ENCODE measurements at regions of chr12 and their contacts with region 1.

Region 1: DNA sequence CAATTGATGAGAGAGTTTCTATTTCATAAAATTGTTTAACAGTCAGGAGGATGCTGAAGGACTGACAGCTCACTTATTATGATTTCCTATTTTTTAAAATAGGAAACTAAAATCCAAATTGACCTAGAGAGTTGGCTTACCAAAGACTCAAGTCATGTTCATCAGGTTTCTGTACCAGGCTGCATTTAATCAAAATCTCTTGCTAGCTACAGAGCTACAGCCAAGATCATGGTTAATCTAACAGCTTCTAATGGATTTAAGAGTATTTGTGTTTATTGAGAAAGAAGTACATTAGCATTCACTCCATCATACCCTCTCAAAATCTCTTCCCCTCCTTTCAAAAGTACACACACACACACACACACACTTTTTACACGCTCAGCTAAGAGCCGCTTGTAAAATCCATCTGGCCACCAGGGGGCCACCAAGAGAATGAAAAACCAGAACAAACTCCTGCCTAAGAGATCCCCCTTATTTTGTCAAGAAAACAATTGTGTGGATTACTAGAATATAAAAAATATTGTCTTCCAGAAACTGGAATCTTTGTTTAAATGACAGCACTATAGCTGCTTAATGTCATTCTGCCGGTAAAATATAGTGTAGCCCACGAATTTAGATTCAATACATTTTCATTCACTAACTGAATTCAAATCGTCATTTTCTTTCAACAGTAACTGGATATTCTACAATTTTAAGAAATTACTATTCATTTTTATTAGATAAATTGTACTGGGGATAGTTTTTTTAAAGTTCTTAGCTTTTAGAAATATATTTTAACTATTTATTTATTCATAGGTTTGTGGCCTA is 334.0 kb downstream of the BTG1 start:
- DNase-seq: peak; percentile 57 to 86 (median 77)
- ATAC-seq: peak; percentile 71 to 88 (median 76)
- H3K4me3 ChIP-seq: no peak overlapping the region
- H3K4me3 Mint-ChIP-seq: peak overlapping the region in 2 of 3 donors; percentile 14 to 23
- H3K27ac ChIP-seq: peak overlapping the region; percentile 13
- H3K27ac Mint-ChIP-seq: peak overlapping the region; percentile 66 to 88
- H3K4me1 ChIP-seq: peaks cover 2 to 5% of the 10 kb centered on the region in 2 experiments
- H3K4me1 Mint-ChIP-seq: peaks cover 25 to 39% (median 30%) of the 10 kb centered on the region in 3 donors
- H3K27me3 ChIP-seq: no peaks in the 10 kb centered on the region
- H3K27me3 Mint-ChIP-seq: no peaks in the 10 kb centered on the region

Region 2: DNA sequence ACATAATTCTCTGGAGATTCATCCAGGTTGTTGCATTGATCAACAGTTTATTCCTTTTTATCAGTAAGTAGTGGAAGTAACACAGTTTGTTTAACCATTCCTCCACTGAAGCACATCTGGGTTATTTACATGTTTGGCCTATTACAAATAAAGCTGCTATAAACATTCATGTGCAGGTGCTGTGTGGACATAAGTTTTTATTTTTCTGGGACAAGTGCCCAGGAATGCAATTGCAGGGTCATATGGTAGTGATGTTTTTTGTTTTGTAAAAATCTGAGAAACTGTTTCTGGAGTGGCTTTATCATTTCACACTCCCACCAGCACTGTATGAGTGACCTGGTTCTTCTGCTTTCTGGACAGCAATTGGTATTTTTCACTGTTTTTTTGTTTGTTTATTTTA is 1362.1 kb before region 1 on chr12:
- CTCF ChIA-PET with region 1: no interaction called
- POLR2A ChIA-PET with region 1: no interaction called
- DNase-seq: no peak
- ATAC-seq: no peak
- H3K4me3 ChIP-seq: no peak overlapping the region
- H3K4me3 Mint-ChIP-seq: no peak overlapping the region
- H3K27ac ChIP-seq: no peak overlapping the region
- H3K27ac Mint-ChIP-seq: no peak overlapping the region
- H3K4me1 ChIP-seq: no peaks in the 10 kb centered on the region
- H3K4me1 Mint-ChIP-seq: no peaks in the 10 kb centered on the region
- H3K27me3 ChIP-seq: no peaks in the 10 kb centered on the region
- H3K27me3 Mint-ChIP-seq: no peaks in the 10 kb centered on the region

Region 3: GRCh38 chr12:90836689-90837088 is 975.0 kb before region 1 on chr12:
- CTCF ChIA-PET with region 1: no interaction called
- POLR2A ChIA-PET with region 1: no interaction called
- DNase-seq: no peak
- ATAC-seq: no peak
- H3K4me3 ChIP-seq: no peak overlapping the region
- H3K4me3 Mint-ChIP-seq: no peak overlapping the region
- H3K27ac ChIP-seq: no peak overlapping the region
- H3K27ac Mint-ChIP-seq: no peak overlapping the region
- H3K4me1 ChIP-seq: no peaks in the 10 kb centered on the region
- H3K4me1 Mint-ChIP-seq: peaks cover 0 to 9% (median 3%) of the 10 kb centered on the region in 3 donors
- H3K27me3 ChIP-seq: no peaks in the 10 kb centered on the region
- H3K27me3 Mint-ChIP-seq: no peaks in the 10 kb centered on the region

Region 4: GRCh38 chr12:91778938-91779400 is 32.7 kb before region 1 on chr12:
- CTCF ChIA-PET with region 1: interaction called in 1 of 2 experiments, 13 read pairs
- POLR2A ChIA-PET with region 1: interaction called in 1 of 2 experiments, 3 read pairs
- DNase-seq: peak in 31 of 35 experiments; percentile 1 to 64 (median 13)
- ATAC-seq: peak; percentile 72 to 86 (median 81)
- H3K4me3 ChIP-seq: peak overlapping the region in 1 of 2 donors; percentile 26
- H3K4me3 Mint-ChIP-seq: peak overlapping the region; percentile 64 to 80 (median 79)
- H3K27ac ChIP-seq: peak overlapping the region; percentile 83
- H3K27ac Mint-ChIP-seq: peak overlapping the region; percentile 90 to 96
- H3K4me1 ChIP-seq: peaks cover 7 to 36% of the 10 kb centered on the region in 2 experiments
- H3K4me1 Mint-ChIP-seq: peaks cover 43 to 49% (median 43%) of the 10 kb centered on the region in 3 donors
- H3K27me3 ChIP-seq: no peaks in the 10 kb centered on the region
- H3K27me3 Mint-ChIP-seq: no peaks in the 10 kb centered on the region

Region 5: DNA sequence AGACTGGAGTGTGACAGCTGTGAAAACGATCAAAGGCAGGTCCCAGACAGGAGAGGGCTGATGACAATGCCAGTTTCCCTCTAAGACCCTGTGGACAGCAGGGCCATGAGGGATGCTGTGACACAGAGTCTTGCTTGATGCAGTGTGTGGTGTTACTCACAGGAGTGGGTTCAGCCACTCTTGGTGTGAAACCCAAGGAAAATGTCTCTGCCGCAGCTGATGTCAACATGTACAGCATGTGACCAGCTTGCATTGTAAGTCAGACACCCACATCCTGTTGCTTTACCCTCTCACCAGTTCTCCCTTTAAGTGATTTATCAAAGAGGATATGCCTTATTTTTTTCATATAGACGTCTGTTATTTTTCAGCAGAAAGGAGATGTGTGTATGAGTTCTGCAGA is 65.3 kb after region 1 on chr12:
- CTCF ChIA-PET with region 1: interaction called, 7 to 39 read pairs
- POLR2A ChIA-PET with region 1: interaction called in 1 of 2 experiments, 9 read pairs
- DNase-seq: peak; percentile 60 to 97 (median 86)
- ATAC-seq: peak; percentile 91 to 98 (median 96)
- H3K4me3 ChIP-seq: peak overlapping the region in 1 of 2 donors; percentile 30
- H3K4me3 Mint-ChIP-seq: peak overlapping the region; percentile 69 to 84 (median 77)
- H3K27ac ChIP-seq: peak overlapping the region; percentile 97
- H3K27ac Mint-ChIP-seq: peak overlapping the region; percentile 97 to 100
- H3K4me1 ChIP-seq: peaks cover 42 to 47% of the 10 kb centered on the region in 2 experiments
- H3K4me1 Mint-ChIP-seq: peaks cover 71 to 84% (median 82%) of the 10 kb centered on the region in 3 donors
- H3K27me3 ChIP-seq: no peaks in the 10 kb centered on the region
- H3K27me3 Mint-ChIP-seq: no peaks in the 10 kb centered on the region

Region 6: GRCh38 chr12:91991399-91992187 is 179.9 kb after region 1 on chr12:
- CTCF ChIA-PET with region 1: interaction called in 1 of 2 experiments, 10 read pairs
- POLR2A ChIA-PET with region 1: interaction called in 1 of 2 experiments, 8 read pairs
- DNase-seq: peak in 1 of 35 experiments; percentile 71
- ATAC-seq: peak; percentile 50 to 86 (median 83)
- H3K4me3 ChIP-seq: no peak overlapping the region
- H3K4me3 Mint-ChIP-seq: no peak overlapping the region
- H3K27ac ChIP-seq: peak overlapping the region; percentile 15
- H3K27ac Mint-ChIP-seq: peak overlapping the region; percentile 68 to 78
- H3K4me1 ChIP-seq: peaks cover 6 to 9% of the 10 kb centered on the region in 2 experiments
- H3K4me1 Mint-ChIP-seq: peaks cover 58 to 65% (median 62%) of the 10 kb centered on the region in 3 donors
- H3K27me3 ChIP-seq: no peaks in the 10 kb centered on the region
- H3K27me3 Mint-ChIP-seq: no peaks in the 10 kb centered on the region

Region 7: DNA sequence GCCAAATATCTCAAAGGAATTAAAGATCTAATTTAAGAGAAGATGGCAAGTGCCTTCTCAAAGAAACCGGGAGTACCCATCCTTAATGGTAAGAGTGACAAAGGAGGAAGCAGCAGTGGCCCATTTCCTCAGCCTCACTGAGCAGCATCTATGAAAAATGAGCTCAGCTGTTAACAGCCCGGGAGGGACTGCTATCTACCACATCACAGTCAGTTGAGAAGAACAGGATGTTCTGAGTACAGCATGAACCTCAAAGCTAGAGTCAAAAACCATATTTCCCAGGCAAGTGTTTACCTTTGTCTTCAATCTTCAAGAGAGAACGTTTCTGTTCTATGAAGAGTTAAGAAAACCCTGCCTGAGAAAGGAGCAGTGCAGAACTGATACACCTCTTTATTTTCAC is 218.9 kb after region 1 on chr12:
- CTCF ChIA-PET with region 1: interaction called, 3 to 11 read pairs
- POLR2A ChIA-PET with region 1: interaction called, 3 to 5 read pairs
- DNase-seq: peak in 34 of 35 experiments; percentile 46 to 88 (median 67)
- ATAC-seq: peak; percentile 92
- H3K4me3 ChIP-seq: peak overlapping the region in 1 of 2 donors; percentile 11
- H3K4me3 Mint-ChIP-seq: peak overlapping the region; percentile 58 to 71 (median 66)
- H3K27ac ChIP-seq: peak overlapping the region; percentile 94
- H3K27ac Mint-ChIP-seq: peak overlapping the region; percentile 97 to 98
- H3K4me1 ChIP-seq: peaks cover 60 to 62% of the 10 kb centered on the region in 2 experiments
- H3K4me1 Mint-ChIP-seq: peaks cover 87 to 91% (median 89%) of the 10 kb centered on the region in 3 donors
- H3K27me3 ChIP-seq: no peaks in the 10 kb centered on the region
- H3K27me3 Mint-ChIP-seq: no peaks in the 10 kb centered on the region

Region 8: DNA sequence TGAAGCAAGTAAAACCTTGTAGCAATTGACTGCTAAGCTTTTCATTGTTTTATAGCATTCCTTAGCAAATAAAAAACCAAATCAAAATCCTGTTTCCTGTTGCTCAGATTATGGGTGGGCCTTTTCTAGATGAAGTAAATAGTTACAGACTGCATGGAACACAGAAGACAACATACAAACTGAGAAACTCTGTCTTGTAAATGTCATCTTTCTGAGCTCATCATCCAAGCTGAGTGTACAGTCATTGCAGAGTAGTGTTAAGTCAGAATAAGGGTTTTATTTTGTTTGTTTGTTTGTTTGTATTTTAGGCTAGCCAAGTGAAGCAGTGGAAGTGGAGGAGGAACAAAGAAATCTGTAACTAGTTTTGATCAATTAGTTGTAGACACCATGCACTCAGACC is 358.4 kb after region 1 on chr12:
- CTCF ChIA-PET with region 1: no interaction called
- POLR2A ChIA-PET with region 1: no interaction called
- DNase-seq: no peak
- ATAC-seq: no peak
- H3K4me3 ChIP-seq: no peak overlapping the region
- H3K4me3 Mint-ChIP-seq: no peak overlapping the region
- H3K27ac ChIP-seq: no peak overlapping the region
- H3K27ac Mint-ChIP-seq: peak overlapping the region; percentile 5 to 6
- H3K4me1 ChIP-seq: peaks cover 2 to 5% of the 10 kb centered on the region in 2 experiments
- H3K4me1 Mint-ChIP-seq: peaks cover 20 to 42% (median 28%) of the 10 kb centered on the region in 3 donors
- H3K27me3 ChIP-seq: no peaks in the 10 kb centered on the region
- H3K27me3 Mint-ChIP-seq: no peaks in the 10 kb centered on the region

Region 9: DNA sequence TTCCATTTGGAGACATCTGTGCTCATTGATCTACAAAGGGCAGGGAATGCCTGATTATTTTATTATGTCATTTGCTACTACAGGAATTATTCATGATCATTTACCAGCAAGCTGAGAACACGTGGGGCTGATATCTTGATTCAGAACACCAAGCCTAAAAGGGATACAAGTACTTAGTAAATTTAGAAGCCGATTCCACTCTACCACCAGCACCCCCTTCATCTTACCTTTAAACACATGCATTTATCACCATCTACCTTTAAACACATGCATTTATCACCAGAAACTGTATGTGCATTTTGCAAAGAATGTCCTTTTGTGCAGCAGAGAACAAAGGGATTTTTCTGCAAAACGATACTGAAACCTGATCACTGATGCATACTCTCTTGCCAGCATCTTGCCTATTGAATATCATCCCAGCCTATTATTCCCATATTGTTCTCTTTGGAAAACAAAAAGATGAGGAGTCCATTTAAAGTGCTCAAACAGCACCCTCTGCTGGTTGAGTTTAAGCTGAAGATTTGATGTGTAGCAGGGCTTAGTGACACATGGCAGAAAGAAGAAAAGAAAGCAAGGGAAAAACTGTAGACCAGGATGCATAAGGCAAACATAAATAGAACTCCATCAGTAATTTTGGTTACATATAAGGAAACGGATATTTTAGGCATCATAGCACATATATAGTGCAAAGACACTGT is 758.5 kb after region 1 on chr12:
- CTCF ChIA-PET with region 1: interaction called in 1 of 2 experiments, 12 read pairs
- POLR2A ChIA-PET with region 1: no interaction called
- DNase-seq: peak in 28 of 35 experiments; percentile 10 to 85 (median 34)
- ATAC-seq: peak; percentile 85 to 95 (median 92)
- H3K4me3 ChIP-seq: peak overlapping the region in 1 of 2 donors; percentile 2
- H3K4me3 Mint-ChIP-seq: no peak overlapping the region
- H3K27ac ChIP-seq: peak overlapping the region; percentile 25
- H3K27ac Mint-ChIP-seq: no peak overlapping the region
- H3K4me1 ChIP-seq: peaks cover 0 to 9% of the 10 kb centered on the region in 2 experiments
- H3K4me1 Mint-ChIP-seq: peaks cover 5 to 35% (median 26%) of the 10 kb centered on the region in 3 donors
- H3K27me3 ChIP-seq: no peaks in the 10 kb centered on the region
- H3K27me3 Mint-ChIP-seq: no peaks in the 10 kb centered on the region